ENCODE measurements at regions of chr1 and their contacts with region 1.

Region 1: GRCh38 chr1:206489980-206490770 is 17.2 kb upstream of the RASSF5 start:
- DNase-seq: peak; percentile 41 to 68
- ATAC-seq: peak; percentile 94 to 95
- H3K4me3 ChIP-seq: no peak overlapping the region
- H3K27ac ChIP-seq: no peak overlapping the region
- H3K4me1 ChIP-seq: no peaks in the 10 kb centered on the region
- H3K27me3 ChIP-seq: no peaks in the 10 kb centered on the region
- CTCF ChIP-seq: peak; percentile 84 to 91 (median 91)
- POLR2A ChIP-seq: no peak

Region 2: DNA sequence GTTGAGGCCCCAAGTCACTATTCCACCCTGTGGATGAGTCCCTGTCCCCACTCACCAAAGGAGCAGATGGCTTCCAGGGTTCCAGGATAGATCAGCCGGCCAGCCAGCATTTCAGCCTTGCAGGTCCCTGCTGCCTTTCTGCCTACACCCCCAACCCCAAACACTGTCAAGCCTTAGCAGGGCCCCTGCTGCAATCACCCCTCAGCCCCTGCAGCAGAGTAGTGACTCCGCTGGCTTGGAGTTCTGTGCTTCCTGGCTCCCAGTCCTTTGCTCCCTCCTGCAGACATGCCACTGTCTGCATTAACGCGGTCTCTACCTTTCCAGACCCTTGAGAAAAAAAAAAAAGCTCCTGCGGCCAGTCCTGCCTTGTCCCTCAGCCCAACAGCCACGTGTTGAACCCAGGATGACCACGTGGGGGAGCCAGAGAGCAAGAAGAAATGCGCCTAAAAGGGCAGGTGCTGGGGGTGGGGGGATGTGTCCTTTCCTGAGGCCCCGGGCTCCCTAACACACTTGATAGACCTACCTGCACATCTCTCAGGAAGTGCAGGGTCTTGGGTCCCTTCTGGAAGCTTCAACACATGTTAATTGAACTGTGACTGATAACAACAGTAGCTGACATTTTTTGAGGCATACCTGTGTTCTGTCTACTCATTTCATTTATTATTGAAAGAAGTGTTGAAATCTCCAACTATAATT is 54.5 kb after region 1 on chr1:
- in situ Hi-C with region 1: no loop called
- intact Hi-C with region 1: loop called (anchors 5 kb)
- DNase-seq: peak; percentile 36 to 60
- ATAC-seq: peak; percentile 82 to 89
- H3K4me3 ChIP-seq: no peak overlapping the region
- H3K27ac ChIP-seq: no peak overlapping the region
- H3K4me1 ChIP-seq: no peaks in the 10 kb centered on the region
- H3K27me3 ChIP-seq: no peaks in the 10 kb centered on the region
- CTCF ChIP-seq: peak; percentile 68 to 88 (median 75)
- POLR2A ChIP-seq: no peak